ENCODE measurements at regions of chr9 and their contacts with region 1.

Region 1: DNA sequence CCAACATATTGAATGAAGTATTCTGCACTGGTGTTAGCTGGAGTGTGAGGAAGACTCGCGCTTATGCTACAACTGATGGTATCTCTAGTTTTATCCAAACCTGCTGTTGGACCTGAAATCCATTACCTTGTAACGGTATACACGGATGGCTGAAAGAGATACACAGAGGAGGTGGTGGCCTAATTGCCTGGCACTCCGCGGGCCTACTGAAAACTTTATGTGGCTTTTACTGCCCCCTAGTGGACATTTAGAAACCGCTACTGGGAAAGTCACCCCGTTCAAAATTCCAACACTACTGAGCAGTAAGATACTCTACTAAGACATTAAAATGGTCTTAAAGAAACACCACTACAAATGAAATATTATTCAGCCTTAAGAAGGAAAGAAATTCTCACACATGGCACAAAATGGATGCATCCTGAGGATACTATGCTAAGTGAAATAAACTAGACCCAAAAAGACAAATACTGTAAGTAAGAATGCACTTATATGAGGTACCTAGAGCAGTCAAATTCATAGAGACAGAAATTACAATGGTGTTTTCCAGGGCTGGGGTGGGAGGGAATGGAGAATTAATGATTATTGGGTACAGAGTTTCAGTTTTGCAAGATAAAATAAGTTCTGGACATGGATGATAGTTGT is 100.4 kb downstream of the TTLL11 start:
- DNase-seq: peak in 10 of 14 experiments; percentile 3 to 70 (median 20)
- ATAC-seq: no peak
- H3K4me3 ChIP-seq: no peak overlapping the region
- H3K4me3 Mint-ChIP-seq: no peak overlapping the region
- H3K27ac ChIP-seq: no peak overlapping the region
- H3K27ac Mint-ChIP-seq: no peak overlapping the region
- H3K4me1 ChIP-seq: no peaks in the 10 kb centered on the region
- H3K4me1 Mint-ChIP-seq: no peaks in the 10 kb centered on the region
- H3K27me3 ChIP-seq: no peaks in the 10 kb centered on the region
- H3K27me3 Mint-ChIP-seq: no peaks in the 10 kb centered on the region
- CTCF ChIP-seq: peak; percentile 86

Region 2: DNA sequence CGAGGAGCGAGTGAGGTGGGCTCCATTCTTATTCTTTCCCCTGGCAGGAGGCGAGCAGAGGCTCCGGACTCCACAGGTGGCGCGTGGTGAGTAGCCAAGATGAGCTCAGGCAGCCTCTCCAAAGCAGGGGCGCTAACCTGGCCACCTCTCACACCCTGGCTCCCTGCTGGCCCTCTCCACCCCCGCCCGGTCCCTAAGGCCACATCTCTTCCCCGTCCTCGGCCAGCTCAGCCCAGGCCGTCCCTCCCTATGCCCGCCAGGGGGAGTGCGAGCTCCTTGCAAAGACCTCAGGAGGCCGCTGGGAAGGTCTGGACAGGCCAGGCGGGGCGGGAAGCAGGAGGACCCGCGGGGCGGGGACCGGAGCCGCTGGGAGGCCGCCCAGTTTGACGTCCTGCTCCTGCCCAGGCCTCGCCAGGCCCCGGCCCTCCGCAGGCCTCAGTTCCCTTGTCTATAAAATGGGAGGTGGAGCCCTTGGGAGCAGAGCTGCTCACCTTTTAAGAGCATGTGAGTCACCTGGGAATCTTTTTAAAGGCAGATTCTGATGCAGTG is 446.7 kb before region 1 on chr9:
- CTCF ChIA-PET with region 1: interaction called, 3 read pairs
- POLR2A ChIA-PET with region 1: no interaction called
- intact Hi-C with region 1: loop called (anchors 1 to 2 kb)
- DNase-seq: peak; percentile 27 to 78 (median 46)
- ATAC-seq: peak; percentile 49
- H3K4me3 ChIP-seq: no peak overlapping the region
- H3K4me3 Mint-ChIP-seq: no peak overlapping the region
- H3K27ac ChIP-seq: no peak overlapping the region
- H3K27ac Mint-ChIP-seq: no peak overlapping the region
- H3K4me1 ChIP-seq: peaks cover 16% of the 10 kb centered on the region
- H3K4me1 Mint-ChIP-seq: peaks cover 2% of the 10 kb centered on the region
- H3K27me3 ChIP-seq: peaks cover 11 to 28% of the 10 kb centered on the region in 2 experiments
- H3K27me3 Mint-ChIP-seq: peaks cover 41% of the 10 kb centered on the region
- CTCF ChIP-seq: peak; percentile 72

Region 3: GRCh38 chr9:121686930-121687541 is 305.7 kb before region 1 on chr9:
- CTCF ChIA-PET with region 1: no interaction called
- POLR2A ChIA-PET with region 1: no interaction called
- intact Hi-C with region 1: loop called (anchors 2 to 5 kb)
- DNase-seq: peak in 9 of 14 experiments; percentile 6 to 58 (median 22)
- ATAC-seq: no peak
- H3K4me3 ChIP-seq: no peak overlapping the region
- H3K4me3 Mint-ChIP-seq: no peak overlapping the region
- H3K27ac ChIP-seq: no peak overlapping the region
- H3K27ac Mint-ChIP-seq: no peak overlapping the region
- H3K4me1 ChIP-seq: no peaks in the 10 kb centered on the region
- H3K4me1 Mint-ChIP-seq: no peaks in the 10 kb centered on the region
- H3K27me3 ChIP-seq: peaks cover 0 to 3% of the 10 kb centered on the region in 2 experiments
- H3K27me3 Mint-ChIP-seq: peaks cover 18% of the 10 kb centered on the region
- CTCF ChIP-seq: peak; percentile 14

Region 4: DNA sequence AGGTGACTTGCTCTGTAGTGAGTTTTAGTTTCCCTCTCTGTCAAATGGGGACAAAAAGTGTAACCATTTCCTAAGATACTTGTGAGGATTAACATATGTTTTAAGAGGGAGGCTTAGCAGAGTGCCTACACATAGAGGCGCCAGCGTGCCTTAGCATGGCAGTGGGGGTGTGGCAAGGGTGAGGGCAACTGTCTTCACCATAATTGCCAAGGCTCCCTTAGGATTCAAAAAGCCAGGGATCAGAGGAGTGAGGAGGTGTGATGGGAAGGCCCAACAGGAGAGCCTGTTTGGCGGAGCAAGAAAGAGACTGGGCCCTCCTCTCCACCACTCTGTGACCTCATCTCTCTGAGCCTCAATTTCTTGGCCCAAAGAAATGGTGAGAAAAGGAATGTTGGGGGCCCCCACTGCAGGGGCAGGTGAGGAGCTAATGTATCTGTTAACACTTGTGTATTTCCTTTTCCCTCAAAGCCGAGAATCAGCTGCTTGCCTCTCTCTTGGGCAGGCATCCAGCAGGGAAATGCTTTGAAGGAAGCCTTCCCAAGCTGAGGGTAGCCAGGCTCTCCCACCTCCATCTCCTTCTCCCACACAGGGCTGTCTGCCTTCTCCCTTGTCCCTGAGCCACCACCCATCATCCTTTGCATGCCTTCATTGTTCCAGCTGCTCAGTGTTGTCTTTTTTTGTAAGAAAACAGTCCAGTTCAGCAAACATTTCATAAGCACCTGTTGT is 265.2 kb before region 1 on chr9:
- CTCF ChIA-PET with region 1: no interaction called
- POLR2A ChIA-PET with region 1: no interaction called
- intact Hi-C with region 1: no loop called
- DNase-seq: no peak
- ATAC-seq: no peak
- H3K4me3 ChIP-seq: no peak overlapping the region
- H3K4me3 Mint-ChIP-seq: no peak overlapping the region
- H3K27ac ChIP-seq: no peak overlapping the region
- H3K27ac Mint-ChIP-seq: no peak overlapping the region
- H3K4me1 ChIP-seq: no peaks in the 10 kb centered on the region
- H3K4me1 Mint-ChIP-seq: no peaks in the 10 kb centered on the region
- H3K27me3 ChIP-seq: no peaks in the 10 kb centered on the region
- H3K27me3 Mint-ChIP-seq: peaks cover 9% of the 10 kb centered on the region
- CTCF ChIP-seq: no peak

Region 5: GRCh38 chr9:121744002-121744686 is 248.5 kb before region 1 on chr9:
- CTCF ChIA-PET with region 1: no interaction called
- POLR2A ChIA-PET with region 1: no interaction called
- intact Hi-C with region 1: loop called (anchors 1 kb)
- DNase-seq: peak in 6 of 14 experiments; percentile 4 to 56 (median 40)
- ATAC-seq: peak; percentile 70
- H3K4me3 ChIP-seq: no peak overlapping the region
- H3K4me3 Mint-ChIP-seq: no peak overlapping the region
- H3K27ac ChIP-seq: no peak overlapping the region
- H3K27ac Mint-ChIP-seq: no peak overlapping the region
- H3K4me1 ChIP-seq: peaks cover 4% of the 10 kb centered on the region
- H3K4me1 Mint-ChIP-seq: peaks cover 15% of the 10 kb centered on the region
- H3K27me3 ChIP-seq: no peaks in the 10 kb centered on the region
- H3K27me3 Mint-ChIP-seq: no peaks in the 10 kb centered on the region
- CTCF ChIP-seq: no peak

Region 6: GRCh38 chr9:121944716-121945191 is 47.9 kb before region 1 on chr9:
- CTCF ChIA-PET with region 1: no interaction called
- POLR2A ChIA-PET with region 1: no interaction called
- intact Hi-C with region 1: no loop called
- DNase-seq: no peak
- ATAC-seq: no peak
- H3K4me3 ChIP-seq: no peak overlapping the region
- H3K4me3 Mint-ChIP-seq: no peak overlapping the region
- H3K27ac ChIP-seq: no peak overlapping the region
- H3K27ac Mint-ChIP-seq: no peak overlapping the region
- H3K4me1 ChIP-seq: no peaks in the 10 kb centered on the region
- H3K4me1 Mint-ChIP-seq: no peaks in the 10 kb centered on the region
- H3K27me3 ChIP-seq: no peaks in the 10 kb centered on the region
- H3K27me3 Mint-ChIP-seq: no peaks in the 10 kb centered on the region
- CTCF ChIP-seq: no peak

Region 7: GRCh38 chr9:121963528-121963995 is 29.1 kb before region 1 on chr9:
- CTCF ChIA-PET with region 1: no interaction called
- POLR2A ChIA-PET with region 1: no interaction called
- intact Hi-C with region 1: no loop called
- DNase-seq: no peak
- ATAC-seq: no peak
- H3K4me3 ChIP-seq: no peak overlapping the region
- H3K4me3 Mint-ChIP-seq: no peak overlapping the region
- H3K27ac ChIP-seq: no peak overlapping the region
- H3K27ac Mint-ChIP-seq: no peak overlapping the region
- H3K4me1 ChIP-seq: no peaks in the 10 kb centered on the region
- H3K4me1 Mint-ChIP-seq: no peaks in the 10 kb centered on the region
- H3K27me3 ChIP-seq: no peaks in the 10 kb centered on the region
- H3K27me3 Mint-ChIP-seq: no peaks in the 10 kb centered on the region
- CTCF ChIP-seq: no peak

Region 8: DNA sequence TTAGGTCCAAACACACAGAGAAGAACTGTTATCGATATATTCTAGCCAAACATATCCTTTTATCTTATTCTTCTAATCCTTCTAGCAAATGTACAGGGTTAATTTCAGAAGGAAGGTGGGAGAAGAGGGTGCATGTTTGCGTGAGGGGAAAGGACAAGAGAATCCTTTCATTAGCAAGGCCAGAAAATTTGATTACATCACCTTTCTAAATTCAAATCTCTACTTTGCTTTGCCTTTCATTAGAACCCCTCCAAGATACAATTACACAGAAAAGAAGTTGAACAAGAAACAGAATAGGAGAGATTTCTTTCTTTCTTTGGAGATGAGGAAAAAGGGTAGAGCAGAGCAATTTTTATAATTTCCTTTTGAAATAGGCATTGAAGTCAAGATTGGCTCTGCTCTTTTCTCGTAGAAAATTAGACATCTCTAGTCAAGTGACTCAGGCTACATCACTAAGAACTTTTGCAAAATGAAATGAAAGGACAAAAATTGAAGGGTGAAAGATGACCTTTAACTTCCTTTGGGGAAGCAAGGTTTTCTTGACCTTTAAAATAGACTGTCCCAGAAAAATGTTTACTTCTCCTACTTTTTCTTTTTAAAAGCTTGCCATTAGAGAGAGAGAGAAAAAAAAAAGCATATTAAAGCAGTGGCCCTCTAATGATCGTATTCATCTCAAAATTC is 19.3 kb after region 1 on chr9:
- CTCF ChIA-PET with region 1: no interaction called
- POLR2A ChIA-PET with region 1: no interaction called
- intact Hi-C with region 1: no loop called
- DNase-seq: no peak
- ATAC-seq: no peak
- H3K4me3 ChIP-seq: no peak overlapping the region
- H3K4me3 Mint-ChIP-seq: no peak overlapping the region
- H3K27ac ChIP-seq: no peak overlapping the region
- H3K27ac Mint-ChIP-seq: no peak overlapping the region
- H3K4me1 ChIP-seq: no peaks in the 10 kb centered on the region
- H3K4me1 Mint-ChIP-seq: no peaks in the 10 kb centered on the region
- H3K27me3 ChIP-seq: no peaks in the 10 kb centered on the region
- H3K27me3 Mint-ChIP-seq: no peaks in the 10 kb centered on the region
- CTCF ChIP-seq: no peak